ENCODE measurements at regions of chr20 and their contacts with region 1.

Region 1: DNA sequence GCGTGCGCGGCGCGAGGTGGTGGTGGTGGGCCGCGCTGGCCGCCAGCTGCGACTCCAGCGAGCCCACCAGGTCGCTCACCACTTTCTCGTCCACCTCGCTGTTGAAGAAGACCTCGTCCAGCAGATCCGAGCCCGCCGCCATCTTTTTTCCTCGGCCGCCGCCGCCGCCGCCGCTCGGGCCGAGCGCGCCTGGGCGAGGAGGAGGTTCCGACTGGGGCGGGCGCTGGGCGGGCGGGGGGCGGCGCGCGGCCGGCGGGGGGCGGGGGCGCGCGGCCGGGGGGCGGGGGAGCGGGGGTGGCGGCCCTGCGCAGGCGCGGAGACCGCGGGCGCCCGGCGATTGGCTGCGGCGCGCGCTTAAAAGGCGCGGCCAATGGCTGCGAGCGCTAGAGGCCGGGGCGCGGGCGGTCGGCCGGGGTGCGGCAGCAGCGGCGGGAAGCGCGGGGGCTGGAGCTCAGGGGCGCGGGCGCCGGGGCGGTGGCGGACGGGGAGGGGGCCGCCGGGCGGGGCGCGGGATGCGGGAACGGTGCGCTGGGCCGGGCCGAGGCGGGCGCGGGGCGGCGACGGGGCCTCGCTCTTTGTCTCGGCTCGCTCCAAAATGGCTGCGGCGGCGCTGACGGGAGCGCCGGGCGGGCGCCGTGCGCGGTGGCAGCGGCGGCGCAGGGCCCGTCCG is at the start of gene TAF4:
- DNase-seq: peak; percentile 83
- ATAC-seq: peak; percentile 79
- H3K4me3 Mint-ChIP-seq: peak within 1 kb of the TSS; percentile 88
- H3K27ac Mint-ChIP-seq: peak within 1 kb of the TSS; percentile 89
- H3K4me1 Mint-ChIP-seq: peaks cover 49% of the 10 kb centered on the region
- H3K27me3 Mint-ChIP-seq: peaks cover 3% of the 10 kb centered on the region
- CTCF ChIP-seq: no peak
- total RNA-seq, gene TAF4: 24.9 and 26.9 TPM in 2 replicates

Region 2: DNA sequence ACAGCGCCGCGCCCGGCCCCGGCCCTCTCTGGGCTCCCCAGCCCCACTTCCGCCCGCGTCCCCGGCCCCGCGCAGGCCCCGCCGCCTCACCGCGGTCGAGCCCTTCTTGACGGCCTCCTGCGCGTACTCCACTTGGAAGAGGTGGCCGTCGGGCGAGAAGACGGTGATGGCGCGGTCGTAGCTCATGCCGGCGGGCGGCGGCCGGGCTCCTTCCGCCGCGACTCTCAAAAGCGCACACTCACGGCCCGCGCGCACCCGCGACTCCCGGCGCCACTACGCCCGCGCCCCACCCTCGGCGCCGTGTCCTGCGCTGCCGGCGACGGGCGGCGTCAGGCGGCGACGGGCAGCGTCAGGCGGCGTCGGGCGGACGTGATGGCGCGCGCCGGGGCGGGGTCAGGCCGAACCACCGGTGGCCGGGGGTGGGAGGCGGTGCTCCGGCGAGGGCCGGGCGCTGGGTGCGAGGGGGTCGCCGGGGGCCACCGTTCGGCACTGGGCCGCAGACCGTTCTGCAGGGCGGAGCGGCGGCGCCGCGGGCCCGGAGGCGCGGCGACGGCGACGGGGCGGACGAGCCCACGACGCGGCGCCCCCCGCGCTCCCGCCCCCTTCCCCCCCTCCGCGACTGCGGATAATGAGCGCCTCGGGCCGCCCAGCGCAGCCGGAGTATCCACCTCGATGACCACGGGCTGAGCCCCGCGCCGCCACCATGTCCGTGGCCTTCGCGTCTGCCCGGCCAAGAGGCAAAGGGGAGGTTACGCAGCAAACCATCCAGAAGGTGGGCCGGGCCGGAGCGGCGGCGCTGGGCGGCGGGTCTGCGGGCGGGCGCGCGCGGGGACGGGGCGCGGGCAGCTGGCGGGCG is 77.5 kb after region 1 on chr20 and contains the starts of genes PSMA7 and SS18L1:
- CTCF ChIA-PET with region 1: interaction called, 3 read pairs
- POLR2A ChIA-PET with region 1: interaction called, 5 read pairs
- intact Hi-C with region 1: loop called (anchors 1 kb)
- DNase-seq: peak; percentile 88
- ATAC-seq: peak; percentile 89
- H3K4me3 Mint-ChIP-seq: peak within 1 kb of the TSS; percentile 89
- H3K27ac Mint-ChIP-seq: peak within 1 kb of the TSS; percentile 78
- H3K4me1 Mint-ChIP-seq: peaks cover 36% of the 10 kb centered on the region
- H3K27me3 Mint-ChIP-seq: no peaks in the 10 kb centered on the region
- CTCF ChIP-seq: no peak
- total RNA-seq, gene PSMA7: 241 and 260 TPM in 2 replicates
- total RNA-seq, gene SS18L1: 9.0 and 9.1 TPM in 2 replicates

Measured in activated B cell treated with CpG ODN at 0.5 μM for 24 hours (primary cell).